GM12878 (cell line): ENCODE measurements at regions of chr9 and their contacts with region 1.

Region 1: DNA sequence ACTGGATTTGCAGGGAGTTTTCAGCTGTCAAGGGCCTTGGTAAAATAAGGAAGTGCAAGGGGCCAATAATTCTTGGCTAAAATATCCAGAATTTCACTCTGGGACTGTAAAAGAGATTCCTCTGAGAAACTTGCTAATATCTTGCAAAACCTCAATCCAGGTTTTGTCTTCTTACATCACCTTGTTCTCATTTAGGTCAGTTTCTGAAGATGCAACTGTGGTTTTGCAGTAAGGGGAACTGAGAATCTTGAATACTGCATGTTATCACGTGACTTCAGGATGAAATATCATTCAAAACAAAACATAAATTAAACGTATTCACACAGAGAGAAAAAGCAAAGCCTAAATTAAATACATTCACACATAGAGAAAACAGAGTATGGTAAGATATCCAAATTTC is 35.0 kb upstream of the RIC1 start:
- DNase-seq: peak; percentile 90
- ATAC-seq: peak; percentile 55
- H3K4me3 ChIP-seq: 0 out of 2 replicates have a peak overlapping the region, but pooled peaks have one; percentile 9
- H3K27ac ChIP-seq: peak overlapping the region; percentile 93
- H3K4me1 ChIP-seq: peaks cover 51% of the 10 kb centered on the region
- H3K27me3 ChIP-seq: no peaks in the 10 kb centered on the region
- CTCF ChIP-seq: no peak
- EP300 ChIP-seq: peak; percentile 100
- POLR2A ChIP-seq: no peak
- RAD21 ChIP-seq: peak; percentile 11; the same call in 1 of the 2 replicates

Region 2: GRCh38 chr9:4886698-4887097 is 707.2 kb before region 1 on chr9:
- CTCF ChIA-PET with region 1: no interaction called
- POLR2A ChIA-PET with region 1: no interaction called
- RAD21 ChIA-PET with region 1: no interaction called
- SMC1A ChIA-PET with region 1: no interaction called
- in situ Hi-C with region 1: no loop called
- intact Hi-C with region 1: loop called (anchors 5 kb)
- DNase-seq: peak; percentile 75
- ATAC-seq: peak; percentile 98
- H3K4me3 ChIP-seq: no peak overlapping the region
- H3K27ac ChIP-seq: no peak overlapping the region
- H3K4me1 ChIP-seq: peaks cover 11% of the 10 kb centered on the region; the same call in 1 of the 2 replicates
- H3K27me3 ChIP-seq: no peaks in the 10 kb centered on the region
- CTCF ChIP-seq: no peak; a peak in 1 of 6 replicates
- EP300 ChIP-seq: peak in 1 of 2 experiments; percentile 41; a peak in 1 of 4 replicates
- POLR2A ChIP-seq: no peak
- RAD21 ChIP-seq: no peak

Region 3: GRCh38 chr9:5263351-5264218 is 330.3 kb before region 1 on chr9:
- CTCF ChIA-PET with region 1: interaction called, 3 read pairs
- POLR2A ChIA-PET with region 1: no interaction called
- RAD21 ChIA-PET with region 1: no interaction called
- SMC1A ChIA-PET with region 1: no interaction called
- in situ Hi-C with region 1: no loop called
- intact Hi-C with region 1: loop called (anchors 10 kb)
- DNase-seq: no peak
- ATAC-seq: peak; percentile 79
- H3K4me3 ChIP-seq: no peak overlapping the region
- H3K27ac ChIP-seq: no peak overlapping the region
- H3K4me1 ChIP-seq: no peaks in the 10 kb centered on the region
- H3K27me3 ChIP-seq: no peaks in the 10 kb centered on the region
- CTCF ChIP-seq: peak; percentile 7 to 17 (median 14); a peak in 1 of 6 replicates
- EP300 ChIP-seq: no peak
- POLR2A ChIP-seq: no peak
- RAD21 ChIP-seq: peak; percentile 33; the same call in 1 of the 2 replicates

Region 4: GRCh38 chr9:5450359-5451091 is 143.4 kb before region 1 on chr9 and contains the start of gene CD274:
- CTCF ChIA-PET with region 1: interaction called, 172 read pairs
- POLR2A ChIA-PET with region 1: interaction called, 6 read pairs
- RAD21 ChIA-PET with region 1: interaction called, 149 read pairs
- SMC1A ChIA-PET with region 1: interaction called, 161 read pairs
- in situ Hi-C with region 1: loop called (anchors 5 kb)
- intact Hi-C with region 1: loop called (anchors 1 kb)
- DNase-seq: no peak
- ATAC-seq: peak; percentile 75
- H3K4me3 ChIP-seq: peak within 1 kb of the TSS; percentile 72
- H3K27ac ChIP-seq: peak within 1 kb of the TSS; percentile 97
- H3K4me1 ChIP-seq: peaks cover 46% of the 10 kb centered on the region
- H3K27me3 ChIP-seq: no peaks in the 10 kb centered on the region
- CTCF ChIP-seq: peak; percentile 57 to 86 (median 81)
- EP300 ChIP-seq: 0 out of 4 replicates have a peak, but pooled peaks of 1 of the 2 experiments have one; percentile 33
- POLR2A ChIP-seq: peak; percentile 95
- RAD21 ChIP-seq: peak; percentile 92
- polyA plus RNA-seq, gene CD274: 9.4 to 12.2 TPM

Region 5: DNA sequence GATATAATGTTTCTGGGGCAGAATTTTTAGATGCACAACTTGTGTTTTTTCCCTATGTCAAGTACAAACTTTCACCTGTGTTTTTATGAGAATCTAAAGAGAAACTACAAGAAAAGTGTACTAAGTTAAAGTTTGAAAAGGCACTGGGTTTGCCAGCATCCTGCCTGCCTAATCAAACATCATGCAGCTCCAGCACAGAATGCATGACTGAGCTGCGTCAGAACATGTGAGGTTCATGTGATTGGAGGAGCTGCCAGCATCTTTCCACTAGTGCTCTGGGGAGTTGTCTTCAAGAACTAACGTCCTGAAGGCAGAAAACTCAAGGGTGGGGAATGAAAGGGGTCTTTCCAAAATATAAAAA is 11.1 kb before region 1 on chr9:
- CTCF ChIA-PET with region 1: interaction called, 21 read pairs
- POLR2A ChIA-PET with region 1: interaction called, 11 read pairs
- RAD21 ChIA-PET with region 1: interaction called, 28 read pairs
- SMC1A ChIA-PET with region 1: interaction called, 27 read pairs
- in situ Hi-C with region 1: no loop called
- intact Hi-C with region 1: no loop called
- DNase-seq: peak; percentile 91
- ATAC-seq: peak; percentile 73
- H3K4me3 ChIP-seq: no peak overlapping the region
- H3K27ac ChIP-seq: peak overlapping the region; percentile 89
- H3K4me1 ChIP-seq: peaks cover 53% of the 10 kb centered on the region
- H3K27me3 ChIP-seq: no peaks in the 10 kb centered on the region
- CTCF ChIP-seq: no peak
- EP300 ChIP-seq: peak in 1 of 2 experiments; percentile 75; a peak in 3 of 4 replicates
- POLR2A ChIP-seq: peak; percentile 14; the same call in 1 of the 2 replicates
- RAD21 ChIP-seq: no peak

Region 6: GRCh38 chr9:5628530-5629311 is 34.8 kb after region 1 on chr9 and contains the start of gene RIC1:
- CTCF ChIA-PET with region 1: interaction called, 23 read pairs
- POLR2A ChIA-PET with region 1: interaction called, 11 read pairs
- RAD21 ChIA-PET with region 1: interaction called, 26 read pairs
- SMC1A ChIA-PET with region 1: interaction called, 22 read pairs
- in situ Hi-C with region 1: no loop called
- intact Hi-C with region 1: loop called (anchors 2 kb)
- DNase-seq: peak; percentile 67
- ATAC-seq: peak; percentile 69
- H3K4me3 ChIP-seq: peak within 1 kb of the TSS; percentile 98
- H3K27ac ChIP-seq: peak within 1 kb of the TSS; percentile 78
- H3K4me1 ChIP-seq: peaks cover 33% of the 10 kb centered on the region
- H3K27me3 ChIP-seq: no peaks in the 10 kb centered on the region
- CTCF ChIP-seq: no peak
- EP300 ChIP-seq: 0 out of 4 replicates have a peak, but pooled peaks of 1 of the 2 experiments have one; percentile 9
- POLR2A ChIP-seq: peak; percentile 84
- RAD21 ChIP-seq: no peak
- polyA plus RNA-seq, gene RIC1: 6.2 to 7.1 TPM

Region 7: DNA sequence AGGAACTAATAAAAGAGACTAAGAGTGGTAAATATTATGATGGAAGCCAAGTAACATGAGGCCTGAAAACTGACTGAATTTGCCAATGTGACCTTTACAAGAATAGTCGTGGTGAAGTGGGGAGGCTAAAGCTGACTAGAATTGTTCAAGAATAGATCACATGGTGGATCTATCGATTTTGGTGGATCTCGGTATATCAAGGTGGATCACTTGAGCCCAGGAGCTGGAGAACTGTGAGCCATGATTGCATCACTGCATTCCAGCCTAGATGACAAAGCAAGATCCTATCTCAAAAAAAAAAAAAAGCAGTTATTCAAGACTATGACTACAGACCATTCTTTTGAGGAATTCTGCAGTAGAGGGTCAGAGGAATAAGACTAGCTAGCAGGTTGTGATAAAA is 224.0 kb after region 1 on chr9:
- CTCF ChIA-PET with region 1: no interaction called
- POLR2A ChIA-PET with region 1: no interaction called
- RAD21 ChIA-PET with region 1: no interaction called
- SMC1A ChIA-PET with region 1: no interaction called
- in situ Hi-C with region 1: no loop called
- intact Hi-C with region 1: no loop called
- DNase-seq: no peak
- ATAC-seq: no peak
- H3K4me3 ChIP-seq: no peak overlapping the region
- H3K27ac ChIP-seq: no peak overlapping the region
- H3K4me1 ChIP-seq: no peaks in the 10 kb centered on the region
- H3K27me3 ChIP-seq: no peaks in the 10 kb centered on the region
- CTCF ChIP-seq: no peak
- EP300 ChIP-seq: no peak
- POLR2A ChIP-seq: no peak
- RAD21 ChIP-seq: no peak